ENCODE measurements at regions of chr3 and their contacts with region 1.

Region 1: GRCh38 chr3:136752422-136753325 is 496 bp upstream of the STAG1 start:
- DNase-seq: peak; percentile 98
- H3K4me3 ChIP-seq: peak overlapping the region; percentile 47 to 73 (median 52)
- H3K27ac ChIP-seq: peak overlapping the region; percentile 87
- H3K4me1 ChIP-seq: peaks cover 16% of the 10 kb centered on the region
- H3K27me3 ChIP-seq: no peaks in the 10 kb centered on the region
- CTCF ChIP-seq: peak in 1 of 2 donors; percentile 28

Region 2: GRCh38 chr3:136196401-136197158 is 556.1 kb before region 1 on chr3:
- CTCF ChIA-PET with region 1: interaction called, 8 read pairs
- dilution Hi-C with region 1: no loop called
- in situ Hi-C with region 1: no loop called
- intact Hi-C with region 1: loop called (anchors 1 kb)
- DNase-seq: peak; percentile 100
- H3K4me3 ChIP-seq: peak overlapping the region; percentile 39 to 93 (median 92)
- H3K27ac ChIP-seq: peak overlapping the region; percentile 76
- H3K4me1 ChIP-seq: peaks cover 13% of the 10 kb centered on the region
- H3K27me3 ChIP-seq: no peaks in the 10 kb centered on the region
- CTCF ChIP-seq: no peak

Region 3: GRCh38 chr3:136390574-136390973 is 362.1 kb before region 1 on chr3:
- CTCF ChIA-PET with region 1: interaction called, 27 read pairs
- dilution Hi-C with region 1: no loop called
- in situ Hi-C with region 1: loop called (anchors 25 kb)
- intact Hi-C with region 1: loop called (anchors 1 kb)
- DNase-seq: no peak
- H3K4me3 ChIP-seq: no peak overlapping the region
- H3K27ac ChIP-seq: no peak overlapping the region
- H3K4me1 ChIP-seq: no peaks in the 10 kb centered on the region
- H3K27me3 ChIP-seq: no peaks in the 10 kb centered on the region
- CTCF ChIP-seq: no peak

Region 4: GRCh38 chr3:136545664-136546268 is 206.9 kb before region 1 on chr3:
- CTCF ChIA-PET with region 1: interaction called, 19 read pairs
- dilution Hi-C with region 1: no loop called
- in situ Hi-C with region 1: no loop called
- intact Hi-C with region 1: loop called (anchors 1 kb)
- DNase-seq: no peak
- H3K4me3 ChIP-seq: no peak overlapping the region
- H3K27ac ChIP-seq: no peak overlapping the region
- H3K4me1 ChIP-seq: peaks cover 6% of the 10 kb centered on the region
- H3K27me3 ChIP-seq: no peaks in the 10 kb centered on the region
- CTCF ChIP-seq: peak in 1 of 2 donors; percentile 37

Region 5: DNA sequence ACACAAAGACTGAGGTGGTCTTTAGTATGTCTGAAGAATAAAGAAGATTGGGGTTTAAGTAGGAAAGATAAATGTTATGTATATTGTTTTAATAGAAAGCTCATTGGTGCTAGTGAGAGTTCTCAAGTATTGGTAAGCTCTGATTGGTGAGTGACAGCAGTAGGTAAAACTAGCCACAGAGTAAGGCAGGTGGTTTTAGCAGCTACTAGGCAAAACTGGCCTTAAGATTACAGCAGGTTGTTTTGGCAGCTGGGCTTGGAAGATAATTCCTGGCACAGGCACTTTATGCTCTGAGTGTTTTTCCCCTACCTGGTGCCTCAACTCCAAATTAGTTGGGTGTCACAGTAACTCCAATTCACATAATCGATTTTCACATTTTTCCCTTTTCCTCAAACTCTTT is 66.8 kb before region 1 on chr3:
- CTCF ChIA-PET with region 1: no interaction called
- dilution Hi-C with region 1: no loop called
- in situ Hi-C with region 1: no loop called
- intact Hi-C with region 1: no loop called
- DNase-seq: no peak
- H3K4me3 ChIP-seq: no peak overlapping the region
- H3K27ac ChIP-seq: no peak overlapping the region
- H3K4me1 ChIP-seq: no peaks in the 10 kb centered on the region
- H3K27me3 ChIP-seq: no peaks in the 10 kb centered on the region
- CTCF ChIP-seq: no peak

Region 6: DNA sequence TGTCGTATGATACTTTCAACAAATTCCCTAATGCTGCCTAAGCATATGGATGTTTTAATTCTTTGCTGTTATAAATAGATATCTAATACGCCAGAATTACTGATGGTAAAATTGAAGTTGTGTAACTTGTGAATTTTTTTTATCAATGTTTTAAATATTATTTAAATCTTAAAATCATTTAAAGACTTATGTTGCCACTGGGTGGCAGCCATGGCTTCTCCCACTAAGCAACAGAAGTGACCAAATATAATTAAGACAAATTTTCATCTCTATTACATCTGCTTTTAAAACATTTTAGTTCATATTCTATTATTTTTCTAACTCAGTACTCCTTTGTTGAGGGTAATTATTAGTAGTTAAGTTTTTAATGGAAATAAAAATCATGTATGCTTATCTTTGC is 197.0 kb after region 1 on chr3:
- CTCF ChIA-PET with region 1: no interaction called
- dilution Hi-C with region 1: no loop called
- in situ Hi-C with region 1: no loop called
- intact Hi-C with region 1: loop called (anchors 2 kb)
- DNase-seq: no peak
- H3K4me3 ChIP-seq: no peak overlapping the region
- H3K27ac ChIP-seq: no peak overlapping the region
- H3K4me1 ChIP-seq: peaks cover 27% of the 10 kb centered on the region
- H3K27me3 ChIP-seq: no peaks in the 10 kb centered on the region
- CTCF ChIP-seq: peak; percentile 17 to 47

Region 7: DNA sequence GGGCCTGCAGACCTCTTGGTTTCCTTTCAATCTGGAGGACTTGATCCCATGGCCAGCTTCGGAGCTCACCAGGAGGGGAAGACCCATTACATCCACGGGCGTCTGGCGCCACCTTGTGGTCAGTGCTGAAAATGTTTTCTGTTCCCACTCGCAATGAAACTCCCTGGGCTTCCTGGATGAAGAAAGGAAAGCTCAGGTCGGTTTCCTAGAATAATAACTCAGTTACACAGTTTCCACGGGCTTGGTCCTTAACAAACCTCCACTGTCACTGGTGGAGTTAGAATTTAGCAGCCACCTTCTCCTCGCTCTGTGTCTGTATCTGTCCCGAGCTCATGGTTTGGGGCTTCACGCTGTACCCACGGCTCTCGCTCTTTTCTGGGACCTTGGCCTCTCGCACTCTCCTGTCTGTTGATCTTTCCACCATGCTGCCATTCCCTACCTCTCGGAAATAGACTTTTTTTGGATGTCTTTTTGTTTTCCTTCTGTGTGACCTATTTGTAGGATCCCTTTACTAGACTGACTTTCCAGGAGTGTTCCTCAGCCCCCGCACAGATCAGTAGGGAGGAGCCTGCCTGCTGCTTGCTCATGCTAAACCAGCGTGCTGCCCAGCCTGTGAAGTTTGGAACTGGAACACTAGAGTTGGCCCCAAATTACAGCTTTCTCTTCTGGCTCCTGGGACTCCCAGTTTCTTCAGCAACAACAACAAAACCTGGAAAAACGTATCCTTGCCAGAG is 261.4 kb after region 1 on chr3:
- CTCF ChIA-PET with region 1: interaction called, 28 read pairs
- dilution Hi-C with region 1: no loop called
- in situ Hi-C with region 1: loop called in 1 of 2 experiments (anchors 5 kb)
- intact Hi-C with region 1: loop called (anchors 1 kb)
- DNase-seq: peak; percentile 75
- H3K4me3 ChIP-seq: peak overlapping the region; percentile 26 to 54 (median 31)
- H3K27ac ChIP-seq: peak overlapping the region; percentile 74
- H3K4me1 ChIP-seq: peaks cover 17% of the 10 kb centered on the region
- H3K27me3 ChIP-seq: no peaks in the 10 kb centered on the region
- CTCF ChIP-seq: peak; percentile 69 to 82

Measured in mammary epithelial cell (primary cell).